Dendritic cell treated with granulocyte-macrophage colony-stimulating factor and Interleukin-4, amounts not matched to agents 40 ng/mL and 50 ng/mL, for 4 days (primary cell): ENCODE measurements at regions of chr21 and their contacts with region 1.

Region 1: GRCh38 chr21:32412162-32413014 is at the start of gene EVA1C:
- H3K4me3 Mint-ChIP-seq: peak within 1 kb of the TSS; percentile 89
- H3K27ac Mint-ChIP-seq: peak within 1 kb of the TSS; percentile 75
- H3K4me1 Mint-ChIP-seq: peaks cover 15% of the 10 kb centered on the region
- H3K27me3 Mint-ChIP-seq: peaks cover 28% of the 10 kb centered on the region

Region 2: DNA sequence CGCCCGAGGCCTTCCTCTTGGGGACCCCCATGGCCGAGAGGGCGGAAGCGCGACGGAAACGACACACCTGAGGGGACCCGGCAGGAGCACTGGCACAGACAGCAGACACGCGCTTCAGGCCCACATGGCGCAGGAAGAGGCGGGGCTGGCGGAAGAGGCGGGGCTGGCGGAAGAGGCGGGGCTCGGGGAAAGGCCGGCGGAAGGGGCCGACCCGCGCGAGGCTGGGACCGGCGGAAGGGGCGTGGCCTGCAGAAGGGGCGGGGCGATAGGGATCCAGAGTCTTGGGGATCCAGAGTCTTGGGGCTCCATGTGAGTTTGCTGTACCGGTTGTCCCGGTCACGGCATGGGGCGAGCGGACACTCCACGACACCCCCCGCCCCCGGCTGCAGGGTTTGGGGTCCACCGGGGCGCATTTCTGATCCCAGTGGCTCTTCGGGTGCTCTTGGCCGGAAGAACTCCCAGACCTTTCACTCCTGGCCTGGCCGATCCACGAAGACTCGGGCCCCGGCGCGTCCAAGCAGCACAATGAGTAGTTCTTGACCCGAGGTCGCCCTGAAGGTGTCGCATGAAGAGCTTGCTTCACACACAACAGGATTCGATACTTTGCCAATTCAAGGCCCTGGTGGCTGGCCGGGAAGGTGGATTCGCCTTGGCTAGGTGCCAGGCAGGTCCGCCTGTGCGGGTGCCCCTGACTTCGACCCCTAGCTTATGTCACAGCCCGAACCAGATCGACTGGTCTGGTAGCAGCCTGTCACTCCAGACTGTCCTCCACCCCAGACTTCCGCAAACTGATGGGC is 19.3 kb before region 1 on chr21 and contains the start of gene URB1:
- intact Hi-C with region 1: loop called (anchors 1 kb)
- H3K4me3 Mint-ChIP-seq: peak within 1 kb of the TSS; percentile 94
- H3K27ac Mint-ChIP-seq: peak within 1 kb of the TSS; percentile 95
- H3K4me1 Mint-ChIP-seq: peaks cover 34% of the 10 kb centered on the region
- H3K27me3 Mint-ChIP-seq: peaks cover 3% of the 10 kb centered on the region

Region 3: DNA sequence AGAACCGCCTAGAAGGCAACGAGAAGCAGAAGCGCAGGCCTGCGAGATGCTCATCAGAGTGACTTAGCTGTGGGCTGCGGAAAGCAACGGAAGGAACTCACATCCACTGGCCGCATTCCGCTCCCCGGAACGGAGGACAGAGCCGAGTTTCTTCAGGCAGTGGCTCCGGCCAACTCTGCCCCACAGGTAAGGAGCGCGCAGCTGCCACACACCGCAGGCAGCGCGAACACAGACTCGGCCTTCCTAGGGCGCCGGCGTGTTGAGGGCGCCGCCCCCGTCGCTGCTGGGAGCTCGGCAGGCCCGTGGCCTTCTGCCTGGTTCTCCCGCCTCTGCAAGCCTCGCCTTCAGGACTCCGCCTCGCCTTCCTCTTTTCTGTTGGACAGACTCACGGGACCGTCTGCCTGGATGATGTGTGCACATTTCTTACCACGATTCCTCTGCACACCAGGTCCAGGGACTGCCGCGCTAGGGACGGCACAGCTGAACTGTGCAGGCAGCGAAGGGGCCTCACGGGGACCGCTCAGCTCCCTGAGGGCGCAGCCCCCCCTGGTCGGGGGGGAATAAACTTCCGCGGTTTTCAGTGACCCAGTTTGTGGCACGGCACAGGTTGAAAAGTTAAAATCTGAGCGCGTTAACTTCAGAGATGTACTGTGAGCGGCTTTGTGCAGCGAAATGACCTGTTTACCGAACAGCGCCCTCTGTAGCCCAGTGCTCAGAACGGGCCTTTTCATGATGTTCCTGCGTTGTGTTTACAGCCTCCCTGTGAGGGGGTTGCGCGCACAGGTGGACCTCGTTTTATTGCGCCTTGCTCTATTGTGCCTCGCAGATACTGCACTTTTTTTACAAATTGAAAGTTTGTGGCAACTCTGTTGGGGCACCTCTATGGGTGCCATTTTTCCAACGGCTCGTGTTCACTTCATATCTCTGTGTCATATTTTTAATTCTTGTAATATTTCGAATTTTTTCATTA is 157.2 kb after region 1 on chr21:
- intact Hi-C with region 1: loop called (anchors 5 kb)
- H3K4me3 Mint-ChIP-seq: peak overlapping the region; percentile 78
- H3K27ac Mint-ChIP-seq: peak overlapping the region; percentile 71
- H3K4me1 Mint-ChIP-seq: peaks cover 11% of the 10 kb centered on the region
- H3K27me3 Mint-ChIP-seq: peaks cover 3% of the 10 kb centered on the region